Endothelial cell of umbilical vein (primary cell): ENCODE measurements at regions of chrX and their contacts with region 1.

Region 1: GRCh38 chrX:80876877-80877276 is 67.2 kb upstream of the BRWD3 start:
- DNase-seq: peak; percentile 8
- H3K4me3 ChIP-seq: no peak overlapping the region
- H3K27ac ChIP-seq: no peak overlapping the region
- H3K4me1 ChIP-seq: no peaks in the 10 kb centered on the region
- H3K27me3 ChIP-seq: no peaks in the 10 kb centered on the region
- CTCF ChIP-seq: peak in 1 of 2 donors; percentile 7
- POLR2A ChIP-seq: no peak

Region 2: GRCh38 chrX:81195712-81196111 is 318.8 kb after region 1 on chrX:
- CTCF ChIA-PET with region 1: interaction called, 21 read pairs
- POLR2A ChIA-PET with region 1: no interaction called
- dilution Hi-C with region 1: no loop called
- intact Hi-C with region 1: loop called (anchors 1 kb)
- DNase-seq: peak; percentile 58
- H3K4me3 ChIP-seq: no peak overlapping the region
- H3K27ac ChIP-seq: no peak overlapping the region
- H3K4me1 ChIP-seq: no peaks in the 10 kb centered on the region
- H3K27me3 ChIP-seq: no peaks in the 10 kb centered on the region
- CTCF ChIP-seq: peak; percentile 33 to 54
- POLR2A ChIP-seq: no peak

Region 3: DNA sequence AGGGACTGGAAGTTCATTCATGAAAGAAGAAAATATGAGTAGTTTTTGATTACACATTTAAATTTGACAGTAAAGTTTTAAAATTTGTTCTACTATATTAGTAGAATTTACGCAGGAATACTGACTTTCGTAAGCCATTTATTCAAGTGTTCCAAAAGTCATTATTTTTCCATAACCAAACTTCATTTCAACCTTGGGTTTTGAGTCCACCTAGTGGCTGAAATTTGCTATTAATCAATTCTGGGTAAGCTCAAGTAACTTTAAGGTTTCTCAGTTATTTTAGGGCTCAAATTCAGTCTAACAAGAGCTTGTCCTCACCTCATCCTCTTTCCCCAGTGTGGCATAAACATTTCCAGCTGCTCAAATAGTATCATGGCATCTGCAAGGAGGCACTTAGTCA is 500.5 kb after region 1 on chrX:
- CTCF ChIA-PET with region 1: interaction called, 40 read pairs
- POLR2A ChIA-PET with region 1: no interaction called
- dilution Hi-C with region 1: no loop called
- intact Hi-C with region 1: loop called (anchors 5 kb)
- DNase-seq: peak; percentile 36
- H3K4me3 ChIP-seq: no peak overlapping the region
- H3K27ac ChIP-seq: no peak overlapping the region
- H3K4me1 ChIP-seq: no peaks in the 10 kb centered on the region
- H3K27me3 ChIP-seq: no peaks in the 10 kb centered on the region
- CTCF ChIP-seq: peak in 1 of 2 donors; percentile 23
- POLR2A ChIP-seq: no peak

Region 4: GRCh38 chrX:82676386-82676785 is 1799.5 kb after region 1 on chrX:
- CTCF ChIA-PET with region 1: interaction called, 11 read pairs
- POLR2A ChIA-PET with region 1: no interaction called
- dilution Hi-C with region 1: no loop called
- intact Hi-C with region 1: no loop called
- DNase-seq: no peak
- H3K4me3 ChIP-seq: no peak overlapping the region
- H3K27ac ChIP-seq: no peak overlapping the region
- H3K4me1 ChIP-seq: no peaks in the 10 kb centered on the region
- H3K27me3 ChIP-seq: no peaks in the 10 kb centered on the region
- CTCF ChIP-seq: no peak
- POLR2A ChIP-seq: no peak